Heart left ventricle (tissue), 16 donors: ENCODE measurements at regions of chr13 and their contacts with region 1.

Region 1: DNA sequence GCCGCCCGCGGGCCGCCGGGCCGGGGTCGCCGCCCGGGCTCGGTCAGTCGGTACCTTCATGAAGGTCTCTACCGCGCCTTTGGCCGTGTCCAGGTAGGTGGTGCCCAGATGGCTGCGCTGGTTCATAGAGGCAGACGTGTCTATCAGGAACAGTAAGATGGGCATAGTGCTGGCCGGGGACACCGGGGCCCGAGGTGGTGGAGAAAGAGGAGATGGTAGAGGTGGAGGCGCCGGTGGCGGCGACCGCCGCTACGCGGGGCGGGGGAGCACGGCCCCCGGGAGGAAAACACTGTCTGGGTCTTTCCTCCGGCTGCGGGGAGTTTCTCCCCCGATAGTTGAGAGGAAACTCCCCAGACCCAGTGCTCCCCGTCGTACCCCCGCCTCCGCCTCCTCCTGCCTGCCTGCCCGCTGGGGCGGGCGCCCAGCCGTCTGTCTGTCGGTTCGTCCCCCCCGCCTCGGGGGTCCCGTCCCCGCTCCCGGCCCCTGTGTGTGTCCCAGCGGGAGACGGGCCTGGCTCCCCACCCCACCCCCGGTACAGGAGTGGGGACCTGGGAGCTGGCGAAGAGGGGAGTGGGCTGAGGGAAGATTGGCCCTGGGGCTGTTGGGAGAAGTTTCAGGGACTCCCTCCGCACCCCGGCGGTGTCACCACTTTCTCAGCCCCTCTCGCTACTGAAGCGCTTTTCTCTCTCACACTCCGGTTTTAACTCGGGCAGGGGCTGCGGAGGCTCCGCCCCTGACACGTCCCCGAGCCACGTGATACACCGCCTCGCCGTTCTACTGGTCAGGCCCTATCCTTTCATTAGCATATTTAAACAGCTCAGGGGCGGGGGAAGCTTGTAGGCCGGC is at the start of gene INTS6:
- DNase-seq: peak; percentile 99 to 100 (median 100)
- ATAC-seq: peak; percentile 92 to 98 (median 96)
- H3K4me3 ChIP-seq: peak within 1 kb of the TSS; percentile 83 to 99 (median 94)
- H3K27ac ChIP-seq: peak within 1 kb of the TSS; percentile 98 to 100 (median 99)
- H3K4me1 ChIP-seq: peaks cover 0 to 43% (median 21%) of the 10 kb centered on the region in 12 donors
- H3K27me3 ChIP-seq: no peaks in the 10 kb centered on the region
- CTCF ChIP-seq: no peak
- POLR2A ChIP-seq: peak; percentile 100
- total RNA-seq, gene INTS6: 18.4 to 30.2 (median 24.4) TPM

Region 2: DNA sequence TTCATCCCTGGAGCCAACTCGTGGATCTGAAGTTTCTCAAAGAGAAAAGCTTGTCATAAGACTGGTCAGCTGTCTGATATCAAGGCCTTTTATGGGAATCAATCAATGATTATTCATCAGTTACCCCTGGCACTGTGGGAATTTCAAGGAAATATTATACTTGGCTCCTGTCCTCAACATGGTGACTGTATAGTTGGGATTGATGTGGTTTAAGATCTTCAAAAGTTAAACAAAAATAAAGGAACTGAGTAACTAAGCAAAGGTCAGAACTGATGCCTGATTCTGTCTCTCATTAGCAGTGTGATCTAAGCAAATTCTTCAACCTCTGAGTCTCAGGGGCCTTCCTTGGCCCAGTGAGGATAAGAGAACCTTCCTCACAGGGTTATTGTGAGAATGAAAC is 135.3 kb before region 1 on chr13:
- intact Hi-C with region 1: no loop called
- DNase-seq: no peak
- ATAC-seq: no peak
- H3K4me3 ChIP-seq: no peak overlapping the region
- H3K27ac ChIP-seq: no peak overlapping the region
- H3K4me1 ChIP-seq: peaks cover 0 to 6% (median 0%) of the 10 kb centered on the region in 12 donors
- H3K27me3 ChIP-seq: no peaks in the 10 kb centered on the region
- CTCF ChIP-seq: no peak
- POLR2A ChIP-seq: no peak

Region 3: DNA sequence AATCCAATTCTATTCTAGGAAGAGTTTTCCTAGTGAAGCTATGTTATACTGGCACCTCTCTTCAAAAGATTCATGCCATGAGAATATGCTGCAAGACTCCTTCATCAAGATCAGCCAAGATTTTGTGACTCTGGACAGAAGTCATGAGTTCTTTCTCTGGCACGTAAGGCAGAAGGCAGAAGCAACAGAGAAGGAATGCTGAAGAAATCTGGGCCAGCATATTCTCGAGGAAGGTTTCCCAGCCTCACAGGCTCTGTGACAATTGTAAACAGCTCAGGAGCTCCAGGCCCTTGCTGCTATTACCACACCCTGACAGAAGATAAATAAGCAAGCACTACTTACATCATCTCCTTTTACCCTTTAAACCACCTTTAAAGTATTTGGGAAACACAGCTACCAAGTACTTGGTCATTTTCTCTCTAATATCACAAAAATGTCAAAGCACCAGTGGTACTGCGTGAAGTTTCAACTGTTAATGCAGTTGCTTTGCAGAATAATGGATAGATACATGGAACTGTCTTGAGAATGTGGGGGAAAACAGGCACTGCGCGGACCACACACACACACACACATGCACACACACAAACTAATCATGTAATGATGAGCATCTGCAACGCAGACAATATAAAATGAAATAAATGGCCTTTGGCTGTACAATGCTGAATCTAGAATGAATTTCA is 55.2 kb before region 1 on chr13:
- intact Hi-C with region 1: no loop called
- DNase-seq: no peak
- ATAC-seq: peak in 3 of 4 donors; percentile 49 to 77 (median 52)
- H3K4me3 ChIP-seq: no peak overlapping the region
- H3K27ac ChIP-seq: peak overlapping the region in 4 of 12 donors; percentile 1 to 52 (median 24)
- H3K4me1 ChIP-seq: peaks cover 0 to 31% (median 15%) of the 10 kb centered on the region in 12 donors
- H3K27me3 ChIP-seq: no peaks in the 10 kb centered on the region
- CTCF ChIP-seq: no peak
- POLR2A ChIP-seq: no peak

Region 4: GRCh38 chr13:51797664-51798488 is 345.3 kb after region 1 on chr13:
- intact Hi-C with region 1: loop called in 8 of 10 experiments (anchors 5 to 10 kb)
- DNase-seq: peak in 1 of 5 donors; percentile 45
- ATAC-seq: peak in 1 of 4 donors; percentile 2
- H3K4me3 ChIP-seq: no peak overlapping the region
- H3K27ac ChIP-seq: no peak overlapping the region
- H3K4me1 ChIP-seq: peaks cover 4 to 34% (median 22%) of the 10 kb centered on the region in 12 donors
- H3K27me3 ChIP-seq: no peaks in the 10 kb centered on the region
- CTCF ChIP-seq: peak in 10 of 12 donors; percentile 23 to 48 (median 36)
- POLR2A ChIP-seq: no peak